Esophagus muscularis mucosa (tissue), 4 donors: ENCODE measurements at regions of chr4 and their contacts with region 1.

Region 1: GRCh38 chr4:25767877-25768725 is 94.7 kb downstream of the SEL1L3 start:
- DNase-seq: no peak
- H3K4me3 ChIP-seq: no peak overlapping the region
- H3K27ac ChIP-seq: no peak overlapping the region
- H3K4me1 ChIP-seq: no peaks in the 10 kb centered on the region
- H3K27me3 ChIP-seq: no peaks in the 10 kb centered on the region
- CTCF ChIP-seq: peak; percentile 54 to 79 (median 71)
- EP300 ChIP-seq: no peak
- POLR2A ChIP-seq: no peak

Region 2: DNA sequence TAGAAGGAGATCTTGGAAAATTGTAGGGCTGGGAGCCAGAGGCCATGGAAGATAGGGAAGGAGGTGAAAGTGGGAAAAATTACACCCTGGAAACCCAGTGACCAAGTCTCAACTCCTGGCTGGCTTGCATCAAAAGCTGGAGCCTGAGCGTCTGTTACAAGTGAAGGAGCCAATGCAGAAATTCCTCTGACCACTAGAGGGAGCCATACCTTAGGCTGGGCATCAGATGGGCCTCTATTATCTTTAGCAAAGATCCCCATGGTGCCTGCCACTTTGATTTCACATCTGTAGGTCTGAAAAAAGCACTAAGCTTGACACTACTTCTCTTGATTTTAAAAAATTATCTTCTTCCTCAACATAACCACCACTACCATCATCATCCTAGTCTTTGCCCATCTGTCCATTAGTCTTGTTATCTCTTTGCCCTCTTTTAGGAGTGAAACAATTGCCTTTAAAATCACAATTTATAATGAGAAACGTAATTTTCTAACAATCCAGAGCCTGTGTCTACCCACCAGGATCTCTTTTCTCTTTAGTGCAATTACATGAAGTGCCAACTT is 328.1 kb before region 1 on chr4:
- intact Hi-C with region 1: loop called (anchors 2 kb)
- DNase-seq: no peak
- H3K4me3 ChIP-seq: no peak overlapping the region
- H3K27ac ChIP-seq: no peak overlapping the region
- H3K4me1 ChIP-seq: peaks cover 0 to 7% (median 3%) of the 10 kb centered on the region in 4 donors
- H3K27me3 ChIP-seq: no peaks in the 10 kb centered on the region
- CTCF ChIP-seq: peak; percentile 58 to 87 (median 81)
- EP300 ChIP-seq: no peak
- POLR2A ChIP-seq: no peak

Region 3: GRCh38 chr4:26257850-26258249 is 489.7 kb after region 1 on chr4:
- intact Hi-C with region 1: no loop called
- DNase-seq: no peak
- H3K4me3 ChIP-seq: no peak overlapping the region
- H3K27ac ChIP-seq: no peak overlapping the region
- H3K4me1 ChIP-seq: no peaks in the 10 kb centered on the region
- H3K27me3 ChIP-seq: no peaks in the 10 kb centered on the region
- CTCF ChIP-seq: no peak
- EP300 ChIP-seq: no peak
- POLR2A ChIP-seq: no peak